ENCODE measurements at regions of chr13 and their contacts with region 1.

Region 1: DNA sequence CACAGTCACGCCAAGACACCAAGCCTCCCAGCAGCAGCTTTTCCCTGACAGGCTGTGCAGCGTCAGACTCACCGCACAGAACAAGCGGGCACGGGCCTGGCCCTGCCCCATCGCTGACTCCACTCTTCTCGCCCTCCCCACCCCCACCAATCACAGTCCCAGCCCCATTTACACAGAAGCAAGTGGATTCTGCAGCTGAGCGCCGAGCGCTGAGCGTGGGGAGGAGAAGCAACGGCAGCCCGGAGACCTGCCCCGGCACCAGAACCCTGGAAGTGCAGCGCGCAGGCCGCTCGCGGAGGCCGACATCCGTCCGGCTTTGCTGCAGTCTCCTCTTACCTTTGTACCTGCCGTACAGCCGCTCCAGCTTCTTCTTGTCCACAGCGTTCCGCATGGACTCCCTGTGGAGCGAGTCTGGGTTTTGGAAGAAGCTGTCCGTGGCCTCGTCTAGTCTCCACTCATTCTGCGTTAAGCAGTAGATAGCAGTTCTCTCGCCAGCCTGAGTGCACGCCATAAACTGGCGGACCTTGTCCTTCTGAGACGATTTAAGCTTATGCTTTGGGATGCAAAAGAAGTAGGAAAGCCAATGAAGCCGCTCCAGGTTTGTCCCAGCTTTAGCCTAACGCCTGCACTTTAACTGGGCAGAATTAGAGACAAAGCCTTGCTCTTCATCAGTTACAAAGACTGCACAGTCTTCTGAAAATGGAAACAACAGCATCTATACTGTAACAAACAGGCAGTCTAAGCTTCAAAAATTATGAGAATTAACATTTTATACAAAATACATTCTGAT is 6.8 kb downstream of the DCUN1D2 start:
- DNase-seq: peak in 2 of 10 donors; percentile 48 to 91

Region 2: GRCh38 chr13:113364311-113364889 is 119.3 kb before region 1 on chr13:
- intact Hi-C with region 1: no loop called
- DNase-seq: peak in 1 of 10 donors; percentile 24

Region 3: DNA sequence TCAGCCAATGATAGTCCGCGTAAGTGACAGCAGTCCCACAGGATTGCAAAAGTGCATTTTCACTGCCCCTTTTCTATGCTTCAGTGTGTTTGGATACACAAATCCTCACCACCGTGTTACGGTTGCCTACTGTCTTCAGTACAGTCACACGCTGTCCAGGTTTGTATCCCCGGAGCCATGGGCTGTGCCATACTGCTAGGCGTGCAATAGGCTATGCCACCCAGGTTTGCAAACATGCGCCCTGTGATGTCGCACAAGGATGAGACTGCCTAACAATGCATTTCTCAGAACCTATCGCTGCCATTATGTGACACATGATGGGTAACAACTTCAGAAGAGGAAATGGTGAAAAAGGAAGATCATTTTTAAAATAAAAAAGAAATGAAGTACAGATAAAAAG is 13.6 kb before region 1 on chr13:
- intact Hi-C with region 1: loop called (anchors 1 kb)
- DNase-seq: no peak